Caki2 (cell line): ENCODE measurements at regions of chr12 and their contacts with region 1.

Region 1: GRCh38 chr12:76871742-76872141 is 7.1 kb downstream of the CSRP2 start:
- DNase-seq: no peak

Region 2: GRCh38 chr12:77189901-77190416 is 318.2 kb after region 1 on chr12:
- in situ Hi-C with region 1: loop called (anchors 5 kb)
- DNase-seq: no peak